HepG2 (cell line): ENCODE measurements at regions of chr11 and their contacts with region 1.

Region 1: DNA sequence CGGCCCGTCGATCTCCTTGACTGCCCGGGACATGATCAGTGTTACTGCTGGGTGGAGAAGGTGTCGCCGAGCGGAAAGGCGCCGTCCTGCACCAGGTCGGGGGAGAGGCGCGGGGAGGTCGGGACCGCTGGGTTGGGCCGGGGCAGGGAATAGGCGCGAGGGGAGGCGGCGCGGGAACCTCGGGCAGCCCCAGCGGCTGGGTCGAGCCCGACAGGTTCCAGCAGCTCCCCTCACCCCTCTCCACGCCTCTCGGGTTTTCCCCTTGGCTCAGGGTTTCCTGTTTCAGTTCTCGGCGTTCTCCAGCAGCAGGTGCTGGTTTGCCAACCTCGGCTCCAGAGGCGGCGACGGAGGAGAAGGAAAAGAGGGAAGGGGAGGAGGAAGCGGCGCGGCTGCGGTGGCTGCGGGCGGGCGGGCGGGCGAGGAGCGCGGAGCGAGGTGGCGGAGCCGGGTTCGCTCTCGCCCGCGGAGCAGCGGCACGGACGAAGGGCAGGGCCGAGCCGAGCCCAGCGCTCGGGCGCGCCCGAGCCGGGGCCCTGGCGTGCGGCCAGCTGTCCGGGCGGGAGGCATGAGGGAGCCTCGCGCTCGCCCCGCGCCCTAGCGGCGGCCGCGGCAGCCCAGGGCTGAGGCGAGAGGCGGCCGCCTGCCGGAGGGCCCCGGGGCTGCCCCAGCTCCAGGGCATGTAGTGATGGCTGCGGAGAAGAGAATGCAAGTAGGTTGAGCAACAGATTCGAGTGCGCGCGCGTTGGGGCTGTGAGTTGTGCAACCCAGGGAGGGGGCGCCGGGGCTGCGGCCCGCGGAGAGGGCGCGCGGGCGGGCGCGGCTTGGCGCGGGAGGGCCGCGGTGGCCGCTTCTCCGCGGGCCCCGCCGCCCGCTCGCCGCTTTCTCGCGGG is at the start of gene ZC3H12C:
- DNase-seq: peak; percentile 84
- ATAC-seq: peak; percentile 92
- H3K4me3 ChIP-seq: peak within 1 kb of the TSS; percentile 68 to 89 (median 80)
- H3K27ac ChIP-seq: peak within 1 kb of the TSS; percentile 87
- H3K4me1 ChIP-seq: peaks cover 27% of the 10 kb centered on the region
- H3K27me3 ChIP-seq: peaks cover 2 to 18% of the 10 kb centered on the region in 2 experiments; a peak in 3 of 5 replicates
- CTCF ChIP-seq: peak; percentile 52
- EP300 ChIP-seq: no peak
- POLR2A ChIP-seq: peak; percentile 62 to 63
- RAD21 ChIP-seq: peak; percentile 65
- total RNA-seq, gene ZC3H12C: 5.7 and 6.8 TPM in 2 replicates

Region 2: GRCh38 chr11:109946322-109946846 is 146.4 kb before region 1 on chr11:
- CTCF ChIA-PET with region 1: no interaction called
- POLR2A ChIA-PET with region 1: no interaction called
- in situ Hi-C with region 1: no loop called
- intact Hi-C with region 1: loop called (anchors 1 kb)
- DNase-seq: peak; percentile 78
- ATAC-seq: peak; percentile 100
- H3K4me3 ChIP-seq: peak overlapping the region; percentile 35 to 47 (median 44); a peak in 4 of 6 replicates
- H3K27ac ChIP-seq: no peak overlapping the region
- H3K4me1 ChIP-seq: 0 out of 2 replicates have a peak, but pooled peaks cover 12% of the 10 kb centered on the region
- H3K27me3 ChIP-seq: no peaks in the 10 kb centered on the region; a peak in 2 of 5 replicates
- CTCF ChIP-seq: peak; percentile 83
- EP300 ChIP-seq: 0 out of 4 replicates have a peak, but pooled peaks of 1 of the 2 experiments have one; percentile 7
- POLR2A ChIP-seq: no peak
- RAD21 ChIP-seq: peak; percentile 51; the same call in 1 of the 2 replicates

Region 3: GRCh38 chr11:110128161-110128560 is 35.4 kb after region 1 on chr11:
- CTCF ChIA-PET with region 1: no interaction called
- POLR2A ChIA-PET with region 1: no interaction called
- in situ Hi-C with region 1: no loop called
- intact Hi-C with region 1: loop called (anchors 5 kb)
- DNase-seq: no peak
- ATAC-seq: no peak
- H3K4me3 ChIP-seq: no peak overlapping the region
- H3K27ac ChIP-seq: no peak overlapping the region
- H3K4me1 ChIP-seq: peaks cover 9% of the 10 kb centered on the region
- H3K27me3 ChIP-seq: no peaks in the 10 kb centered on the region
- CTCF ChIP-seq: no peak
- EP300 ChIP-seq: no peak
- POLR2A ChIP-seq: no peak
- RAD21 ChIP-seq: no peak

Region 4: GRCh38 chr11:110272919-110273318 is 180.2 kb after region 1 on chr11:
- CTCF ChIA-PET with region 1: no interaction called
- POLR2A ChIA-PET with region 1: no interaction called
- in situ Hi-C with region 1: no loop called
- intact Hi-C with region 1: no loop called
- DNase-seq: no peak
- ATAC-seq: no peak
- H3K4me3 ChIP-seq: no peak overlapping the region
- H3K27ac ChIP-seq: no peak overlapping the region
- H3K4me1 ChIP-seq: no peaks in the 10 kb centered on the region
- H3K27me3 ChIP-seq: no peaks in the 10 kb centered on the region
- CTCF ChIP-seq: no peak
- EP300 ChIP-seq: no peak
- POLR2A ChIP-seq: no peak
- RAD21 ChIP-seq: no peak

Region 5: DNA sequence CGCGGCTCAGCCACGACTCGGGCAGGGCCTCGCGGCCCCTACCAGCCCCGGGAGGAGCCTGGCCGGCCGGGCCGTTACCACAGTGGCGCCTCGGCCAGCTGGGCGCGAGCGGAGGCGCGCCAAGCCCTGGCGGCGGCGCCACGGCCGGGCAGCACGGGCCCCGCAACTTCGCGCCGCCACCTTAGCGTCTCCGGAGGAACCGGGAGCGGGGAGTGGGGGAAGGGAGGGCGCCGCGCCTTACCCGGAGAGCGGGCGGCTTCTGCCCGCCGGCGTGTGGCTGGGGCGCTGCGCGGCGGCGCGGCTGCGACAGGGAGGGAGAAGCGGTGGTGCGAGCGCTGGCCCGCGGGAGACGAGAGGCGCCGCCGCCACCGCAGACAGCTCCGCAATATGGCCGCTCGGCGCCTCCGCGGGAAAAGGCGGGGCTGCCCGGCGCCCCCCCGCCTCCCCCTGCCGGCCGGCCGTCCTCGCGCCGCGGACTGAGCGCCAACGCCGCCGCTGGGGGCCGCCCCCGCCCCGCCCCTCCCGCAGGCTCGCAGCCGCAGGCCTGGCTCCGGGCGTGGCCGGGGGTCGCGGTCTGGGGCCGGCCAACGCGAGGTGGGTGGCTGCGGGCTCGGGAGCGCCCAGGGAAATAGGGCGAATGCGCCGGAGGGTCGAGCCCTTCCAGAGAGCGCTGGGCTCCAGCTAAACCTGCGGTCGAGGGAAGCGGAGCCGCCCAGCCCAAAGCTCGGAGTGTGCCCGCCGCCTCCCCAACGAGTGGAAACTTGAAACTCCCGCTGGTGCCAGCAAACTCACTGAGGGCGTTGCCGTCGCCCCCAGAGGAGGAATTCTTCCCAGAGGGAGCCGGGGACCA is 203.7 kb after region 1 on chr11 and contains the start of gene RDX:
- CTCF ChIA-PET with region 1: no interaction called
- POLR2A ChIA-PET with region 1: interaction called, 3 read pairs
- in situ Hi-C with region 1: no loop called
- intact Hi-C with region 1: loop called (anchors 5 kb)
- DNase-seq: peak; percentile 52
- ATAC-seq: peak; percentile 76
- H3K4me3 ChIP-seq: peak within 1 kb of the TSS; percentile 79 to 92 (median 91)
- H3K27ac ChIP-seq: peak within 1 kb of the TSS; percentile 79
- H3K4me1 ChIP-seq: peaks cover 60% of the 10 kb centered on the region
- H3K27me3 ChIP-seq: no peaks in the 10 kb centered on the region
- CTCF ChIP-seq: no peak
- EP300 ChIP-seq: no peak
- POLR2A ChIP-seq: peak; percentile 50 to 75; a peak in 3 of 4 replicates
- RAD21 ChIP-seq: no peak
- total RNA-seq, gene RDX: 63.1 and 93.4 TPM in 2 replicates

Region 6: DNA sequence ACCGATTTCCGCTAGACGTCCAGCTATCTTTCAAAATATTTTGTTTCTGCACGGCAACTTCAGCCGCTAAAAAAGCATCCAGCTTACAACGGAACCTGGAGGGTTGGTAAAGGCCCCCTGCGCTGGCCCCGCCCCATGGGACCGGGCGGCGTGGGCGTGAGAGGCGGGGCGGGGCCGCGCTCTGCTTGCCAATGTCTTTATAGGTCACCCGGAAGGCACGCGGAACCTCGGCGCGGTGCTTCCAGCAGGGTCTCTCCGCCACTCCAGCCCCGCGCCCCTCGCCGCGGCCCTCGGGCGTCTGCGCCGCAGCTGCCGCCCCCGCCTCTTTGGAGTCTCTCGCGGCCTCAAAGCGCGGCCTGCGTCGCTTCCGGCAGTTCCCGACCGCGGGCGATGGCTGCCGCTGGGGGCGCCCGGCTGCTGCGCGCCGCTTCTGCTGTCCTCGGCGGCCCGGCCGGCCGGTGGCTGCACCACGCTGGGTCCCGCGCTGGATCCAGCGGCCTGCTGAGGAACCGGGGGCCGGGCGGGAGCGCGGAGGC is 337.0 kb after region 1 on chr11 and contains the start of gene FDX1:
- CTCF ChIA-PET with region 1: no interaction called
- POLR2A ChIA-PET with region 1: interaction called, 4 read pairs
- in situ Hi-C with region 1: no loop called
- intact Hi-C with region 1: loop called (anchors 10 kb)
- DNase-seq: peak; percentile 71
- ATAC-seq: peak; percentile 93
- H3K4me3 ChIP-seq: peak within 1 kb of the TSS; percentile 61 to 96 (median 91)
- H3K27ac ChIP-seq: peak within 1 kb of the TSS; percentile 80
- H3K4me1 ChIP-seq: peaks cover 26% of the 10 kb centered on the region
- H3K27me3 ChIP-seq: no peaks in the 10 kb centered on the region; a peak in 1 of 5 replicates
- CTCF ChIP-seq: peak; percentile 61; the same call in 1 of the 2 replicates
- EP300 ChIP-seq: no peak
- POLR2A ChIP-seq: peak; percentile 30 to 58; a peak in 3 of 4 replicates
- RAD21 ChIP-seq: peak; percentile 61; the same call in 1 of the 2 replicates
- total RNA-seq, gene FDX1: 13.1 and 14.5 TPM in 2 replicates